ENCODE measurements at regions of chr3 and their contacts with region 1.

Region 1: GRCh38 chr3:8501371-8502131 is at the start of gene LMCD1:
- DNase-seq: peak; percentile 83
- ATAC-seq: peak; percentile 98
- H3K4me3 ChIP-seq: peak within 1 kb of the TSS; percentile 38 to 51
- H3K27ac ChIP-seq: no peak within 1 kb of the TSS
- H3K4me1 ChIP-seq: peaks cover 15 to 50% of the 10 kb centered on the region in 2 experiments
- H3K27me3 ChIP-seq: no peaks in the 10 kb centered on the region
- CTCF ChIP-seq: no peak
- POLR2A ChIP-seq: no peak
- RAD21 ChIP-seq: no peak
- total RNA-seq, gene LMCD1: 4.6 TPM

Region 2: GRCh38 chr3:8491271-8492144 is 10.0 kb before region 1 on chr3:
- CTCF ChIA-PET with region 1: no interaction called
- POLR2A ChIA-PET with region 1: interaction called, 5 read pairs
- RAD21 ChIA-PET with region 1: interaction called in 1 of 2 experiments, 10 read pairs
- intact Hi-C with region 1: no loop called
- DNase-seq: no peak
- ATAC-seq: no peak
- H3K4me3 ChIP-seq: no peak overlapping the region
- H3K27ac ChIP-seq: no peak overlapping the region
- H3K4me1 ChIP-seq: peaks cover 0 to 15% of the 10 kb centered on the region in 2 experiments; a peak in 1 of 4 replicates
- H3K27me3 ChIP-seq: no peaks in the 10 kb centered on the region
- CTCF ChIP-seq: no peak
- POLR2A ChIP-seq: no peak
- RAD21 ChIP-seq: no peak

Measured in HCT116 (cell line).